ENCODE measurements at regions of chr7 and their contacts with region 1.

Region 1: DNA sequence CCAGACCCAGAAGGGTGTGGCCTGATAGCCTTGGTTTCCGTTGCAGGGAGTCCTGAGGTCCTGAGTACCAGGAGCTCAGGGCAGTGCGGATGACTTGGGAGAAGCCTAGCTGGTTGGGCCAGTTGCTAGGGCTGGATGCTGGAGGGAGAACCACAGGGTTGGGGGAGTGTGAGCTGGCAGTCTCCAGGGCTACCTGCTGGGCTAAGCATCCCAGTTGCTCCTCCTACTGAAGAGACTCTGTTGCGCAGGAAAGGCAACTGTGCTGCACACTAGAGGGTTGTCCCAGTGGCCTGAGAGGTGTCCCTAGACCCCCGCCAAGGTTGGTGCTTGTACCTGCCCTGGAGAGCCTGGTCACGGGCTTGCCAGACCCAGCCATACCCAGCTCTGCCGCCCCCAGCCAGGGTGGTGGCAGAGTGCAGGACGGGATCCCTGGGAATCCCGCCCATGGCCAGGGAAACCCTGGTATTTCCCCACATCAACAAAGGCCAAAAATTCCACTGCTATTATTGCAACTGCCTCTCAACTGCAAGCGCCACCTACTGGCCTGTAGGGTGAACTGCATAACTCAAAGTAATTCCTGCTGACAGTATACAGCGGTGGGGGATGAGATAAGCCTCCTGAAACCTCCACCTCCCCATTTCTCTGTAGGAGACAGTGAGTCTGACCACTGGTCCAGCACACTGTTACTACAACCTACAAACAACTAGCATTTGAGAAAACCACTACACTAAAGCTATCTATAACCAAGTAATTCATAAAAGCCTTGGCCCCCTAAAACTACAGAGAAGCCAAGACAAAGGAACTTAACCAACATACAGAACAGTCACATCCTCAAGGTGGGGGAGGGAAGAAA is 67.6 kb upstream of the DDC start:
- DNase-seq: peak; percentile 42
- H3K27ac ChIP-seq: no peak overlapping the region
- CTCF ChIP-seq: peak; percentile 85

Region 2: GRCh38 chr7:50621206-50621605 is 11.6 kb before region 1 on chr7:
- CTCF ChIA-PET with region 1: interaction called, 16 read pairs
- POLR2A ChIA-PET with region 1: no interaction called
- DNase-seq: no peak
- H3K27ac ChIP-seq: no peak overlapping the region
- CTCF ChIP-seq: no peak

Region 3: GRCh38 chr7:50826371-50827172 is 193.8 kb after region 1 on chr7:
- CTCF ChIA-PET with region 1: no interaction called
- POLR2A ChIA-PET with region 1: no interaction called
- DNase-seq: peak; percentile 78
- H3K27ac ChIP-seq: peak overlapping the region; percentile 58
- CTCF ChIP-seq: no peak

Measured in RWPE1 (cell line).